ENCODE measurements at regions of chr6 and their contacts with region 1.

Region 1: DNA sequence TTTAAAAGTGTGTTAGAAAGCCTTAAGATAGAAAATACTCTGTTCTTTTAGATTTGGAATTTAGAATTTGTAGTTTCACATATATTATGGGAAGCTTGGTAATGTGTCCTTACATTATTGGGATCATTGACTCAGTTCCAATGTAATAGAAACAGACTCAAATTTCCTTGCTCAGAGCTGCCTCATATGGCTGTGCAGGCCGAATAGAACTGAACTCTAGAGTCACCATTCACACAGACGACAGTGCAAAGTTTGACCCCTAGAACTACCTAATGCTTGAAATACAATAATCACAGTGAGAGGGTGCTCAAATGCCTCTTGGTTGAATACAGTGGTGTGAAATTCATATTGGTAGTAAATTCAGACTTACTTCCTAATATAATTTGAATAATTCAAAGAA is 482.7 kb upstream of the CITED2 start:
- DNase-seq: no peak
- ATAC-seq: no peak
- H3K4me3 Mint-ChIP-seq: no peak overlapping the region
- H3K27ac Mint-ChIP-seq: no peak overlapping the region
- H3K4me1 Mint-ChIP-seq: no peaks in the 10 kb centered on the region
- H3K27me3 Mint-ChIP-seq: no peaks in the 10 kb centered on the region

Region 2: GRCh38 chr6:139204978-139205377 is 652.2 kb before region 1 on chr6:
- CTCF ChIA-PET with region 1: no interaction called
- POLR2A ChIA-PET with region 1: no interaction called
- intact Hi-C with region 1: no loop called
- DNase-seq: peak; percentile 43
- ATAC-seq: no peak
- H3K4me3 Mint-ChIP-seq: no peak overlapping the region
- H3K27ac Mint-ChIP-seq: no peak overlapping the region
- H3K4me1 Mint-ChIP-seq: peaks cover 4% of the 10 kb centered on the region
- H3K27me3 Mint-ChIP-seq: no peaks in the 10 kb centered on the region

Region 3: DNA sequence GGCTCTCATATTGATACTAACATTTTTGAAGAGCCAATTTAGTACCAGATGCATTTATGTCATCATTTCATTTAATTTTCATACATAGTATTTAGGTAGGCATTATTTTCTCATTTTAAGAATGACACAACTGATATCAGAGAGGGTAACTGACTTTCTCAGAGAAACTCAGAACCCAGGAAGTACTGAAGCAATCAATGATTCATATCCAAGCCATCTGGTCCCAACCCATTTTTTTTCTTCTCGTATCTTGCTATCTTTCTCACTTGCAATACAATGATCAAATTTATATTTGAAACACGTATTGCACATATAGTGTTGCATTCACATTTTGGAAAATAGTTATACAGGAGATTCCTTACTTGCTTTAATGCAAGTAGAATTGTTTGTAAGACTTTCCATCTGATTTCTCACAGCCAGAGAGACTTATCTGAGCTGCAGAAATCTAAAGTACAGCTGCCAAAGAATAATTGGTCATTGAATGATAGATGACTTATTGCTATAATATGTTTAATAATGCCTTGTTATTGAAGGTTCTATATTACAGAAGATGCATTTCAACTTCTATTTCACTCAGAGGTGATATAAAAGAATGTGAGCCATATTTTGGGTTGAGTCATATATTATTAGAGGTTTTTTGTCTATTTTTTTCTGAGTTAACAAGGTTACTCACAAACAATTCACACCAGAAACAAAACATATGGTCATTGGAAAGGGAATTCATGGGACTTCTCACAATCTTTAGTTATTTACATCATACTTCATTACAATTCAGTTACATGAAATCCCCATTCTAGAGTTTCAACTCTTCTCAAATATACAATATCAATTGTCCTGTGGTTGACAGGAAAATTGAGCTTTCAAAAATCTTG is 145.2 kb before region 1 on chr6:
- CTCF ChIA-PET with region 1: no interaction called
- POLR2A ChIA-PET with region 1: no interaction called
- intact Hi-C with region 1: no loop called
- DNase-seq: no peak
- ATAC-seq: no peak
- H3K4me3 Mint-ChIP-seq: no peak overlapping the region
- H3K27ac Mint-ChIP-seq: no peak overlapping the region
- H3K4me1 Mint-ChIP-seq: no peaks in the 10 kb centered on the region
- H3K27me3 Mint-ChIP-seq: peaks cover 8% of the 10 kb centered on the region

Region 4: DNA sequence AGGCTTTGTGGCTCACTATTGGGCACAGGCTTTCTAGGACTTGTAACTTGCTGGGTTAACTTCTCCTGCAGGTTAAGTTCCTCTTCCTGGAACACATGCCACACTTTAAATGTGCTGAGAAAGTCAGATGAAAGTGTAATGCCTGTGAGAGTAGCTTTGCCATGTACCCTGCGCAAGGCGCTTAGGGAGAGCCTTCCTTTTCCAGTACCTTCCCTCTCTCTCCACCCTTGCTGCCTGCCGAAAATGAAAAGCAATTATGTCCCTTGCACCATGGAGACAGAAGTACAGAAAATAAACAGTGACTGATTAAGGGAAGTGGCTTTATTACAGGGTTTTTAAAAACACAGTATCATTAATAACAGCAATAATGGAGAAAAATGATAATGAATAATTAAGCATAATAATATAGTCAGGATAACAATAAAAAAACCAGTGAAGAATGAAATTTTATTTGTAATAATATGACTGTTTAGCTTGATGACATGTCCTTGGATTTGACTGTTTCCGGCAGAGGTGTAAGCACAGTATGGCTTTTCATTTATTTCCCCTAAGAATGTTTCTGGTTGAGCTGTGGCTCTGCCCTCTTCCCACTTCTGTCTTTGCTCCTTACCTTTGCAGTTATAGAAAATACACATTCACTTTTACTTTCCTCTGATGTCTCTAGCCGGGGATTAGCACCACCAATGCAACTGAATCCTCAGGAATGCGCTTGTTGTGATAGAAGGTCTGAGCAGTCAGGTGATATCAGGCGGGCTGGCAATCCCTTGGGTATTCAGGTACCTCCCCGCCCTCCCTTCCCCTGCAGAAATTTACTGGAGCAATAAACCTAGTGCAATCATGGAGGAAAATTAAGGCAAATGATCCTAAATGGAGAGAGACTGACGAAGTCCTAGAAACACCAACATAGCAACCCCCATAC is 10.3 kb before region 1 on chr6:
- CTCF ChIA-PET with region 1: no interaction called
- POLR2A ChIA-PET with region 1: no interaction called
- intact Hi-C with region 1: no loop called
- DNase-seq: no peak
- ATAC-seq: no peak
- H3K4me3 Mint-ChIP-seq: no peak overlapping the region
- H3K27ac Mint-ChIP-seq: no peak overlapping the region
- H3K4me1 Mint-ChIP-seq: peaks cover 2% of the 10 kb centered on the region
- H3K27me3 Mint-ChIP-seq: peaks cover 6% of the 10 kb centered on the region

Region 5: GRCh38 chr6:139881728-139882211 is 24.6 kb after region 1 on chr6:
- CTCF ChIA-PET with region 1: no interaction called
- POLR2A ChIA-PET with region 1: no interaction called
- intact Hi-C with region 1: loop called in 1 of 2 experiments (anchors 1 kb)
- DNase-seq: peak; percentile 33
- ATAC-seq: peak; percentile 61
- H3K4me3 Mint-ChIP-seq: no peak overlapping the region
- H3K27ac Mint-ChIP-seq: no peak overlapping the region
- H3K4me1 Mint-ChIP-seq: peaks cover 2% of the 10 kb centered on the region
- H3K27me3 Mint-ChIP-seq: peaks cover 2% of the 10 kb centered on the region

Region 6: GRCh38 chr6:139996253-139996834 is 139.2 kb after region 1 on chr6:
- CTCF ChIA-PET with region 1: no interaction called
- POLR2A ChIA-PET with region 1: no interaction called
- intact Hi-C with region 1: no loop called
- DNase-seq: no peak
- ATAC-seq: no peak
- H3K4me3 Mint-ChIP-seq: no peak overlapping the region
- H3K27ac Mint-ChIP-seq: no peak overlapping the region
- H3K4me1 Mint-ChIP-seq: no peaks in the 10 kb centered on the region
- H3K27me3 Mint-ChIP-seq: no peaks in the 10 kb centered on the region

Measured in activated CD4-positive, alpha-beta T cell treated with anti-CD3 and anti-CD28 coated beads for 36 hours (primary cell).